PC-3 (cell line): ENCODE measurements at regions of chr12 and their contacts with region 1.

Region 1: DNA sequence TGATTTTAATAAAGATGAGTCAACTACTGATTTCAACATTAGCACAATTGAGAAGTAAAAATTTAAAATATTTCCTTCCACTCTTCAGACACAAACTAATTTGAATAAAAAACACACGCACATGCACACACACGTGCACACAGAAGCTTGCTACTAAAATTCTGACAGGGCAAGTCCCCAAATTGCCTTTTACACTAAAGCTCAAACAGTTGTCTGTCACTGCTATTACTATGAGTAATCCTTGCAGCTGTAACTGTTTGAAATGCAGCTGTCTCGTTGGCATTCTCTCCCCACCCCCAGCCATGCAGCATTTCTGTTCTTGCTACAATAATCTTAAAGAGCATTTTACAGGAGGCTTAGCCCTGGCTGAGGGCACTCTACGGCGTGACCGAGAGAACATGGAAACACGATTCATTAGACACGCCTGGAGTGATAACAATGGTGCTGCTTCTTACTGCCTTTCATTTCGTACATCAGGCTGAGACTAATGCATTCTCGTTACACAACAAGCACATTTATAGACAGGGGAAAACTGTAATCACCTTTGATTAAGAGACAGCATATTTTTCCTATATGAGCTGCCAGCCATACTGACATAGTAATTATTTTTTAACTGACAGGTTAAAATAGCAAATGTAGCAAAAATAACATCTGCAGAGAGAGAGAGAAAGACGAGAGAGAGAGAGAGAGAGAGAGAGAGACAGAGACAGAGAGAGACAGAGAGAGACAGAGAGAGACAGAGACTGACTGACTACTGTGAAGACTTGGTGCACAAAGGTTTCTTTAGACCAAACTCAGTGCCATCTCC is 153.8 kb downstream of the MED13L start:
- DNase-seq: peak; percentile 76
- ATAC-seq: peak; percentile 87
- H3K4me3 ChIP-seq: peak overlapping the region; percentile 61
- H3K27ac ChIP-seq: peak overlapping the region; percentile 29
- H3K4me1 ChIP-seq: peaks cover 44% of the 10 kb centered on the region
- H3K27me3 ChIP-seq: no peaks in the 10 kb centered on the region
- CTCF ChIP-seq: no peak

Region 2: GRCh38 chr12:116015525-116015924 is 108.1 kb before region 1 on chr12:
- CTCF ChIA-PET with region 1: interaction called, 4 read pairs
- POLR2A ChIA-PET with region 1: no interaction called
- intact Hi-C with region 1: loop called (anchors 5 kb)
- DNase-seq: peak; percentile 74
- ATAC-seq: peak; percentile 89
- H3K4me3 ChIP-seq: no peak overlapping the region
- H3K27ac ChIP-seq: no peak overlapping the region
- H3K4me1 ChIP-seq: peaks cover 8% of the 10 kb centered on the region
- H3K27me3 ChIP-seq: no peaks in the 10 kb centered on the region
- CTCF ChIP-seq: peak; percentile 87

Region 3: DNA sequence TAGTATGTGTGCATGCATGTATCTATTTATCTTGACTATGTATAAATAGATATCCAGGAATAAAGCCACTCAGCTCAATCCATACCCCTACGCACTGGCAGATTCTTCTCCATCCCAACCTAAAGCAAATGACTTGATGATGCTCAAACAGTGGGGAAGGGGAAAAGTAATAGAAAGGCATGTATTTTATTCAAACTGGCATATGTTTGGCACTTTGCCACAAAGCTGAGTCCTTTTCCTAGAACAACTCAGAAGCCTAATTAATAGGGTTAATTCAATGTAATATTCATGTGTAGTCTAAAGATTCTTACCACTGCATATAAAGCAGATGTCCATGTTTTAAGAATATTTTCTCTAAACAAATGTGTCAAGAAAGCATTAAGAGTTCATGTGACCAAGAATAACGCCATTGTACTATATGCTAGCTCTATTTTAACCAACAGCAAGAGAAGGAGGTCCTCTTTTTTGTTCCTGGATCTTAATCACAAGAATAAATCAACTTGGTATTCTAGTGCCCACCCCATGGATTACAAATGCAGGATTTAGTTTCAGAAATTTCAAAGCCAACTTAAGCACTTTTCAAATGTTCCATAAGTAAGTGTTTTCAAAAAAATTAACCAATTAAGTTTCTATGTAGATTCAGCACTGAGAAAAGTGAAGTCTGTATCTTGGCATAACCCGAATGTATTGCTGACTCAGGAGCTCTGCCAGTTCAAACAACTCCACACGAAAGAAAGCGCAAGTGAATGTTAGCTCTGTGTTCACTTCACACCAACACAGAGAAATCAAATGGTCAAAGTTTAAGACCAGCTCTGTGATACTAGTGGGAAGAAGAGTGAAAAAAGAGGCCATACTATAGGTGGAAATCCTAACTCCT is 79.8 kb before region 1 on chr12:
- CTCF ChIA-PET with region 1: no interaction called
- POLR2A ChIA-PET with region 1: no interaction called
- intact Hi-C with region 1: no loop called
- DNase-seq: no peak
- ATAC-seq: no peak
- H3K4me3 ChIP-seq: no peak overlapping the region
- H3K27ac ChIP-seq: no peak overlapping the region
- H3K4me1 ChIP-seq: peaks cover 20% of the 10 kb centered on the region
- H3K27me3 ChIP-seq: no peaks in the 10 kb centered on the region
- CTCF ChIP-seq: no peak

Region 4: DNA sequence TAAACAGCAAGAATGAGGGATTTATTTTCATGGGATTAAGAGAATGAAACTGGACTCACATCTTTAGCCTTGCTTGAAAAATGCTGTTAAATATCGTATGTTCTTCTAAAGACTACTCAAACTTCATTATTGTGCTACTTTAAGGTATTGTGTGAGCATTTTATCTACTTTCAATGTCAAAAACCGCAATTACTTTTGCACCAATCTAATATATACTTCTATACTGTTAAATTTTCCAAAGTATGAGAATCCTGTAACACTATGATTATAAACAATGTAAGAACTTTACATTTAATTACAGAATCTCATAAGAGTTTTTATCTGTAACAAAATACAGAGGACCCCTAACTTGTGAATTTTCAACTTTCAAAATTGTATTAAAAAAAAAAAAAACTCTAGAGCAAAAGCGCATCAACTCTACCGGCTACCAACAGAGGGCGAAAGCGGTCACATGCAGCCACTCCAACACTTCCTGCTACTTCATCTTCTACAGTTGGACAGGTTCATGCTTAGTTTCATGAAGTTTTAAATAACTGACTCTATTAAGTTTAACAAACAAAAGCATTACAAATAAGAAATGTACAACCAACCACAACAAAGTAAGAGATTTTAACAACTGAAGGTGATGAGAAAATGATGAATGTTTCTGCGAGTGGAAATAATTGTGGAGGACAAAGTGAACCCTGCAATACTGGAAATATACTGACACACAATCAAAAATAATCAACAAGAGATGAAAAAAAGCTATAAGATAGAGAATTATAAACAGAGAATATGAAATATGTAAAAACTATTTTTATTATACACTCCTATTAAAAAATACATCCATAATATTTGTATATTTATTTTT is 57.0 kb before region 1 on chr12:
- CTCF ChIA-PET with region 1: no interaction called
- POLR2A ChIA-PET with region 1: no interaction called
- intact Hi-C with region 1: loop called (anchors 5 kb)
- DNase-seq: peak; percentile 66
- ATAC-seq: peak; percentile 61
- H3K4me3 ChIP-seq: no peak overlapping the region
- H3K27ac ChIP-seq: no peak overlapping the region
- H3K4me1 ChIP-seq: peaks cover 6% of the 10 kb centered on the region
- H3K27me3 ChIP-seq: no peaks in the 10 kb centered on the region
- CTCF ChIP-seq: peak; percentile 98

Region 5: GRCh38 chr12:116135209-116135930 is 11.7 kb after region 1 on chr12:
- CTCF ChIA-PET with region 1: no interaction called
- POLR2A ChIA-PET with region 1: interaction called, 3 read pairs
- intact Hi-C with region 1: loop called (anchors 1 kb)
- DNase-seq: peak; percentile 93
- ATAC-seq: peak; percentile 79
- H3K4me3 ChIP-seq: no peak overlapping the region
- H3K27ac ChIP-seq: peak overlapping the region; percentile 53
- H3K4me1 ChIP-seq: peaks cover 39% of the 10 kb centered on the region
- H3K27me3 ChIP-seq: no peaks in the 10 kb centered on the region
- CTCF ChIP-seq: no peak

Region 6: GRCh38 chr12:117134059-117134458 is 1010.4 kb after region 1 on chr12:
- CTCF ChIA-PET with region 1: no interaction called
- POLR2A ChIA-PET with region 1: interaction called, 33 read pairs
- intact Hi-C with region 1: no loop called
- DNase-seq: no peak
- ATAC-seq: no peak
- H3K4me3 ChIP-seq: no peak overlapping the region
- H3K27ac ChIP-seq: no peak overlapping the region
- H3K4me1 ChIP-seq: peaks cover 14% of the 10 kb centered on the region
- H3K27me3 ChIP-seq: no peaks in the 10 kb centered on the region
- CTCF ChIP-seq: no peak